Activated CD4-positive, alpha-beta T cell treated with anti-CD3 and anti-CD28 coated beads, Interleukin-2, amount 10 ng/mL, durations not matched to agents 24 days and 14 days (primary cell): ENCODE measurements at regions of chr9 and their contacts with region 1.

Region 1: DNA sequence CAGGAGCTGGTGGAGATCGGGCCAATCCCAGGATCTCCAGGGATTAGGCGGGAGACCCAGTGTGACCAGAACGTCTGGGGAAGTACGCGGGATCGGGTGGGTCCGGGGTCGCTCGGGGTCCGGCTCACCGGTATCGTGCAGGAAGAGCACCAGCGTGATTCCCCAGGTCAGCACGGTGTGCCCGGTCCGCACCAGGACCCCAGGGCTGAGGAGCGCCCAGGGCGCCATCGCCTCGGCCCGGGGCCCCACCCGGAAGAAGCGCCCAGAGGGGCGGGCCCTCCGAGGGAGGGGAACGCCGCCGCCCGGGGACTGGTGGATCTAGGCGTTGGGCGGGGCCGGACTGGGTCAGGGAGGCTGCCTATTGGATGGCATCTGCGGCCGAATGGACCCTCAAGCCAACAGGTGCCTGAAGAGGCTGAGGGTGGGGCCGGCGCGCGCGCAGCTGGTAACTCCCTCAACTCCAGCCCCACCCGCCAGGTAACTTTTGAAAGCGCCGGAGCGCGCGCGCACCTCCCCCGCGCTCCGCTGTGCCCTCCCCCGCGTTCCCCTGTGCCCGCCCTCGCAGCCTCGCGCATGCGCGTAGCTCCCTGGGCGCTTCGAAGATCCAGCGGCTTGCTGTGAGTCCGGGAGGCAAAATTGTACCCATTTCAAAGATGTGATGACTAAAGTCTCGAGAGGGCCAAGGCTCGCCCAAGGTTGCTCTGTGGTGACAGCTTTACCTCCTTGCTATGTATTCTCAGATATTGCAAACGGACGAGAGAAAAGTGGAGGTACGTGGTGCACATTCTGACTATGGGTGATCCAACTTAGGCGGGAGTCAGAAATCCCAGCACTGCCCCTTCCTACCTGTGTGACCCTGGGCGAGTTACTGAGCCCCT is at the start of gene ZDHHC12:
- DNase-seq: peak; percentile 100
- H3K4me3 Mint-ChIP-seq: peak within 1 kb of the TSS; percentile 99
- H3K27ac Mint-ChIP-seq: peak within 1 kb of the TSS; percentile 94
- H3K4me1 Mint-ChIP-seq: peaks cover 37% of the 10 kb centered on the region
- H3K27me3 Mint-ChIP-seq: no peaks in the 10 kb centered on the region
- total RNA-seq, gene ZDHHC12: 46.9 and 48.4 TPM in 2 replicates

Region 2: DNA sequence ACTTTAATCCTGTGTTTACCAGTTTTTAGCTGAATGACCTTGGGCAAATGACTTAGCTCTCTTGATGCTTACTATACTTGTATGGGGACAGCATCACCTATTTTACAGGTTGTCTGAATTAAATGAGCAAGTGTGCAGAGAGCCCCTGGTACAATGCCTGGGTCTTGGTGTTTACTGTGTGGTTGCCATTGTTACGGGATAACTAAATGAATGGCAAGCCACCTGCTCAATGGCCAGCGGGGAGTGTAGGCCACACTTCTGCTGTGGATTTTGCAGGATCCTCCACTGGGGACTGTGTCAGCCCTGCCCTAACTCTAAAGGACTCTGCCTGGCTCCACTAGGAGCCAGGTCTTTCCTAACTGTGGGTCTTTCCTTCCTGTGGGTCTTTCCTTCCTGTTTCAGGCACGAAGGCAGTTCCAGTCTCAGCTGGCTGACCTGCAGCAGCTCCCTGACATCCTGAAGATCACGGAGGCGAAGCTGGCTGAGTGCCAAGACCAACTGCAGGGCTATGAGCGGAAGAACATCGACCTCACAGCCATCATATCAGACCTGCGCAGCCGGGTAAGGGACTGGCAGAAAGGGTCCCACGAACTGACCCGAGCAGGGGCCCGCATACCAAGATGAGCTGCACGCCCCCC is 229.9 kb before region 1 on chr9:
- intact Hi-C with region 1: no loop called
- DNase-seq: no peak
- H3K4me3 Mint-ChIP-seq: no peak overlapping the region
- H3K27ac Mint-ChIP-seq: no peak overlapping the region
- H3K4me1 Mint-ChIP-seq: peaks cover 2% of the 10 kb centered on the region
- H3K27me3 Mint-ChIP-seq: no peaks in the 10 kb centered on the region

Region 3: GRCh38 chr9:128504485-128505413 is 219.4 kb before region 1 on chr9 and contains the start of gene GLE1:
- intact Hi-C with region 1: loop called (anchors 1 kb)
- DNase-seq: peak; percentile 100
- H3K4me3 Mint-ChIP-seq: peak within 1 kb of the TSS; percentile 96
- H3K27ac Mint-ChIP-seq: peak within 1 kb of the TSS; percentile 95
- H3K4me1 Mint-ChIP-seq: peaks cover 25% of the 10 kb centered on the region
- H3K27me3 Mint-ChIP-seq: no peaks in the 10 kb centered on the region
- total RNA-seq, gene GLE1: 53.3 and 54.1 TPM in 2 replicates

Region 4: GRCh38 chr9:128575469-128575868 is 148.6 kb before region 1 on chr9:
- intact Hi-C with region 1: no loop called
- DNase-seq: no peak
- H3K4me3 Mint-ChIP-seq: no peak overlapping the region
- H3K27ac Mint-ChIP-seq: no peak overlapping the region
- H3K4me1 Mint-ChIP-seq: peaks cover 9% of the 10 kb centered on the region
- H3K27me3 Mint-ChIP-seq: no peaks in the 10 kb centered on the region

Region 5: DNA sequence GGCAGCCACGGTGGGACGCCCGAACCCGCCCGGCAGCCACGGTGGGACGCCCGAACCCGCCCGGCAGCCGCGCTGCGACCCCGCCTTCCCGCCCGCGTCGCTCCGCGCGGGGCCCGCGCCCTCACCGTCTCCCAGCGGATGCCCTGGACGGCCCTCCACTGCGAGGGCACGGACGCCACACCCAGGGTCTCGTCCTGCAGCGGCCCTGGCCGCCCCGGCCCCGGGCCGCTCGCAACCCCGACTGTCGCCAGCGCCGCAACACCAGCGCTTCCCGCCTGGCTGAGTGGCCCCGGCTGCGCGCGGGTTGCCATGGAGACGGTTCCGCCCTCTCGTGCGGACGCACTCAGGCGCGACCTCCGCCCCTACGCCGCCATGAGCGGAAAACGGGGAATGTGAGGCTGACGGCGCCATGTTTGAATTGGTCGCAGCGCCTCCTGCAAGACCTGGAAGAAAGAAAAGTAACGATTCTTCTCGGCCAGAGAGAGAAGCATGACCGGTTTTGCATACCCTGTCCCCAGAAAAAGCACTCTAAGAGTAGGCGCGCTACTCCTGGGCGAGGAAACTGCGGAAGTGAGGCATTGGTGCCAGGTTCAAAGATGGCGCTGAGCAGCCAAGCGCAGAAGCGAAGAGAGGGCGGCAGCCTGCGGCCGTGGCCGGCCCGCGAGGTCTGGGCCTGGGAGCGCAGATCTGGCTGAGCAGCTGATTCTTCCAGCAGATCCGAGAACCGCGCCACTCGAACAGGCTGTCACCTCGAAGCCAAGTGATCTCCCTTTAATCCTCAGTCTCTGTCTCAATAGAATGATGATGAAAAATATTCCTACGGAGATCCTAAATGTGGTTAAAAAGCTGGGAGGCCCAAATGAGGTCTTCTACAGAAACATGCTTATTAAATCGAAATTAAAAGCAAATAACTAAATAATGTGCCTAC is 67.4 kb before region 1 on chr9 and contains the start of gene DYNC2I2:
- intact Hi-C with region 1: loop called (anchors 2 kb)
- DNase-seq: peak; percentile 99
- H3K4me3 Mint-ChIP-seq: peak within 1 kb of the TSS; percentile 90
- H3K27ac Mint-ChIP-seq: peak within 1 kb of the TSS; percentile 100
- H3K4me1 Mint-ChIP-seq: peaks cover 10% of the 10 kb centered on the region
- H3K27me3 Mint-ChIP-seq: no peaks in the 10 kb centered on the region
- total RNA-seq, gene DYNC2I2: 47.4 and 47.7 TPM in 2 replicates

Region 6: DNA sequence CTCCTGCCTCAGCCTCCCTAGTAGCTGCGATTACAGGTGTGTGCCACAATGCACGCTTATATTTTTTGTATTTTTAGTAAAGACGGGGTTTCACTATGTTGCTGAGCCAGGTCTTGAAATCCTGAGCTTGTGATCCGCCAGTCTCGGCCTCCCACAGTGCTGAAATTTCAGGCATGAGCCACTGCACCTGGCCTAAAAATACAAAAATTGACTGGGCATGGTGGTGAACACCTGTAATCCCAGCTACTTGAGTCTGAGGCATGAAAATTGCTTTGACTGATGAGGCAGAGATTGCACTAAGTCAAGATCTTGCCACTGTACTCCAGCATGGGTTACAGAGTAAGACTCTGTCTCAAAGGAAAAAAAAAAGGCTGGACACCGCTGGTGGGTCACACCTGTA is 54.3 kb before region 1 on chr9:
- intact Hi-C with region 1: no loop called
- DNase-seq: no peak
- H3K4me3 Mint-ChIP-seq: no peak overlapping the region
- H3K27ac Mint-ChIP-seq: no peak overlapping the region
- H3K4me1 Mint-ChIP-seq: no peaks in the 10 kb centered on the region
- H3K27me3 Mint-ChIP-seq: no peaks in the 10 kb centered on the region

Region 7: GRCh38 chr9:128702445-128702948 is 21.6 kb before region 1 on chr9 and contains the start of gene PKN3:
- intact Hi-C with region 1: loop called (anchors 2 kb)
- DNase-seq: peak; percentile 97
- H3K4me3 Mint-ChIP-seq: peak within 1 kb of the TSS; percentile 84
- H3K27ac Mint-ChIP-seq: peak within 1 kb of the TSS; percentile 80
- H3K4me1 Mint-ChIP-seq: peaks cover 8% of the 10 kb centered on the region
- H3K27me3 Mint-ChIP-seq: no peaks in the 10 kb centered on the region
- total RNA-seq, gene PKN3: 22.9 and 24.3 TPM in 2 replicates

Region 8: DNA sequence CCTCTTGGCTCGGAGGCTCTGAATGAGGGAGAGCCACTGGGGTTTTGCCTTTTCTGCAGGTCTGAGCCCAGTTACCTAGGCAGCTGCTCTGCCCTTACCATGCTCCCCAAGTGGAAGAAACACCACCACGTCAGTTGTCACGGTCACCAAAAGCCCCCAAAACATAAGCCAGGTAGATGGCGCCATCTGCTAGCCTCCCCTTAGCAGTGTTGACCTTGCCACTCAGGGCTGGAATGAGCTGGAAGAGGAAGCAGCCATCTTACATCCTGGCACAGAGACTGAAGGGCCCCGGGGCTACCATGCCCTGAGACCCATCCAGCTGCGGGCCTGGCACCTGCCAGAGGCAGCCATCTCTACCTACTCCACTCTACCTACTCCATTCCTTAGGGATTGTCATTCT is 40.3 kb after region 1 on chr9:
- intact Hi-C with region 1: no loop called
- DNase-seq: no peak
- H3K4me3 Mint-ChIP-seq: no peak overlapping the region
- H3K27ac Mint-ChIP-seq: no peak overlapping the region
- H3K4me1 Mint-ChIP-seq: peaks cover 4% of the 10 kb centered on the region
- H3K27me3 Mint-ChIP-seq: no peaks in the 10 kb centered on the region

Region 9: GRCh38 chr9:128818099-128818838 is 94.2 kb after region 1 on chr9 and contains the start of gene ENDOG:
- intact Hi-C with region 1: loop called (anchors 5 kb)
- DNase-seq: peak; percentile 100
- H3K4me3 Mint-ChIP-seq: peak within 1 kb of the TSS; percentile 85
- H3K27ac Mint-ChIP-seq: peak within 1 kb of the TSS; percentile 84
- H3K4me1 Mint-ChIP-seq: peaks cover 12% of the 10 kb centered on the region
- H3K27me3 Mint-ChIP-seq: no peaks in the 10 kb centered on the region
- total RNA-seq, gene ENDOG: 22.9 and 23.3 TPM in 2 replicates

Region 10: GRCh38 chr9:129036241-129036922 is 312.3 kb after region 1 on chr9 and contains the start of gene MIGA2:
- intact Hi-C with region 1: loop called (anchors 1 kb)
- DNase-seq: peak; percentile 98
- H3K4me3 Mint-ChIP-seq: peak within 1 kb of the TSS; percentile 98
- H3K27ac Mint-ChIP-seq: peak within 1 kb of the TSS; percentile 84
- H3K4me1 Mint-ChIP-seq: peaks cover 26% of the 10 kb centered on the region
- H3K27me3 Mint-ChIP-seq: peaks cover 2% of the 10 kb centered on the region
- total RNA-seq, gene MIGA2: 43.3 and 44.3 TPM in 2 replicates